Posterior vena cava (tissue), 2 donors: ENCODE measurements at regions of chr9 and their contacts with region 1.

Region 1: DNA sequence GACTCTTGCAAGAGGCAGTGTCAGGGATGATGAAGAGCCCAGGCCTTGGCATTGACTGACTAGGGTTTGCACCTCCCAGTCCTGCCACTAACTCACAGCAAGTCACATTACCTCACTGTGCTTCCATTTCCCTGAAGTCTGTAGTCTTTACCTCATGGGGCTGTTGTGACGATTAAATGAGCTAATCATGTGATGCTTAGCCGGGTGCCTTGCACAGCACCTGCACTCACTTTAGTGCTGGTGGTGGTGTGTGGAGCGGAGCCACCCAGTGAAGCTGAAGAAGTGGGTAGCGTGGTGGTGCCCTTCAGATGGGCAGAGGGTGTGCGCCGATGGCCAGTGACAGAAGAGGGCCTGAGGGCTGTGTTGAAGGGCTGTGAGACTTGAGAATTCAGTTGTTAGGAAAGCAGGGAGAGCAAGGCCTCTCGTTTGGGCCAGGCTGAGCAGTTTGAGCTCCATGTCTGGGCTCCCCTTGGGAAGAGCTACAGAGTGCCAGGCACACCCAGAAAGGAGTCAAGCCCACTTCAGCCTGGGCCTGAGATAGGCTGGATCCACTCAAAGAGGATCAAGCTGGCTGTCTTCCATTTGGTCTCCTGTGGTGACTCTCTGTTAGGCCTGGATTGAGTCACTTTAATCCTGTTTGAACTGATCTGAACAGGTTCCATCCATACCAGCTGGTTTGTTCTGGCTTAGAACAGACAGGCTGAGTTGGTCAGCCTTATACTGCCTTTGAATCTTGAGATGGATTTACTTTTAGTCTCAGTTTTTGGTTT is 42.5 kb downstream of the RALGPS1 start:
- DNase-seq: no peak

Region 2: GRCh38 chr9:126914458-126915280 is 42.4 kb before region 1 on chr9 and contains the start of gene RALGPS1:
- intact Hi-C with region 1: no loop called
- DNase-seq: peak; percentile 97
- total RNA-seq, gene RALGPS1: 6.4 to 7.8 TPM

Region 3: GRCh38 chr9:126991183-126991582 is 34.1 kb after region 1 on chr9:
- intact Hi-C with region 1: no loop called
- DNase-seq: no peak

Region 4: DNA sequence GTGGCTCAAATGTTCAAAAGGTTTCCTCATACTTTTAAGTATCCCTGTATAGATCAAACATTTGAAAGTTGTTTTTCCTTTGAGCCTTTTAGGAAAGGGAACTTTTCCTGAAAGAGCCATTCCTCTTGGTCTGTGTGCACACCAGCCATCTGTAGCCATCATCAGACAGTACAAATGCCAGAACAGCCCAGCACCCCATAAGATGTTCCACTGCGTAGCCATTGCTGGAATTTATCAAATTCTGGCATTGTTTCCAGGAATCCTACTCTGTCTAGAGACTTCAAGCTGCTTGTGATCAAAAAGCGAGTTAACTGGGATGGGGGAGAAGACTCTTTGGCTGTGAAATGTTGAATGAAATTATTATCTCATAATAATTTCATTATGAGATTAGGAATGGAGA is 57.1 kb after region 1 on chr9:
- intact Hi-C with region 1: loop called in 1 of 2 experiments (anchors 10 kb)
- DNase-seq: no peak

Region 5: GRCh38 chr9:128259156-128259555 is 1302.1 kb after region 1 on chr9:
- intact Hi-C with region 1: no loop called
- DNase-seq: no peak